ENCODE measurements at regions of chr15 and their contacts with region 1.

Region 1: DNA sequence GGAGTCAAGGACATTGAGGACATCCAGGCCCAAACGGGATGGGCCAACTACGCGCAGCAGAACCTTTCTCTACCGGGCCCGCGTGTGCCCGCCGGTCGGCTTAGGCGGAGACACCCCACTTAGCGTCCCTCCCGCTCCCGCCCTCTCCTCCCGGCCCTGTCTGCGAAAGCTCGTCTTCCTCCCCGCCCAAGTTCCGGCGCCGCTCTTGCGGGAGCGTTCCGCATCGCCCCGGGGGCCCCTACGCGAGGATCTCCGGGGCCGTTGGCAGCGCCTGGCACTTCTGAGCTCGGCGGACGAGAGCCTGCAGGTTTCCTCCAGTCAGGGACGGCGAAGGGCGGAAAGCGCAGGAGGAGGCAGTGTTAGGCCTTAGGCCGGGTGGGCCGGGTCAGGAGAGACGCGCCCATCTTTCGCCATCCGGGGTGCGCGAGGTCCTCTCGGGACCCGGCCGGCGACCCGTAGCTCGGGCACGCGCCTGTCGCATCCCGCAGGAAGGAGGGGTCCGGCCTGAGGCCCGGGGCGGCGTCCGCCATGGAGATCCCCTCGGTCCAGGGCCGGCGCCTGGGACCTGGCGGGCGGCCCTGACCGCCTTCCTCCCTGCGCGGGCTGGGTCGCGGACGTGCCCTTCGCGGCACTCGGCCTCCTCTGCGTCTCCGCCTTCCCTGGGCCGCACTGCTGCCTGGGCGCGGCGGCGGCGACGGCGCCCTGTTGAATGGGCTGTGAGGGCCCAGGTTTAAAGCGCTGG is at the start of gene FEM1B:
- DNase-seq: peak; percentile 97
- ATAC-seq: peak; percentile 79
- H3K4me3 ChIP-seq: peak within 1 kb of the TSS; percentile 77 to 89 (median 79)
- H3K4me3 Mint-ChIP-seq: peak within 1 kb of the TSS; percentile 98
- H3K27ac ChIP-seq: peak within 1 kb of the TSS; percentile 96
- H3K27ac Mint-ChIP-seq: peak within 1 kb of the TSS; percentile 98
- H3K4me1 ChIP-seq: peaks cover 40% of the 10 kb centered on the region in 2 donors
- H3K4me1 Mint-ChIP-seq: peaks cover 57% of the 10 kb centered on the region
- H3K27me3 ChIP-seq: no peaks in the 10 kb centered on the region
- H3K27me3 Mint-ChIP-seq: no peaks in the 10 kb centered on the region
- CTCF ChIP-seq: no peak
- total RNA-seq, gene FEM1B: 52.4 and 54.4 TPM in 2 replicates

Region 2: GRCh38 chr15:67542420-67543347 is 735.1 kb before region 1 on chr15 and contains the start of gene MAP2K5:
- CTCF ChIA-PET with region 1: no interaction called
- POLR2A ChIA-PET with region 1: no interaction called
- intact Hi-C with region 1: loop called (anchors 5 kb)
- DNase-seq: peak; percentile 85
- ATAC-seq: peak; percentile 80
- H3K4me3 ChIP-seq: peak within 1 kb of the TSS; percentile 78 to 99 (median 83)
- H3K4me3 Mint-ChIP-seq: peak within 1 kb of the TSS; percentile 91
- H3K27ac ChIP-seq: peak within 1 kb of the TSS; percentile 79 to 83
- H3K27ac Mint-ChIP-seq: peak within 1 kb of the TSS; percentile 93
- H3K4me1 ChIP-seq: peaks cover 25 to 28% of the 10 kb centered on the region in 2 donors
- H3K4me1 Mint-ChIP-seq: peaks cover 51% of the 10 kb centered on the region
- H3K27me3 ChIP-seq: peaks cover 0 to 6% (median 3%) of the 10 kb centered on the region in 4 experiments
- H3K27me3 Mint-ChIP-seq: peaks cover 5% of the 10 kb centered on the region
- CTCF ChIP-seq: no peak
- total RNA-seq, gene MAP2K5: 40.0 and 47.1 TPM in 2 replicates

Region 3: DNA sequence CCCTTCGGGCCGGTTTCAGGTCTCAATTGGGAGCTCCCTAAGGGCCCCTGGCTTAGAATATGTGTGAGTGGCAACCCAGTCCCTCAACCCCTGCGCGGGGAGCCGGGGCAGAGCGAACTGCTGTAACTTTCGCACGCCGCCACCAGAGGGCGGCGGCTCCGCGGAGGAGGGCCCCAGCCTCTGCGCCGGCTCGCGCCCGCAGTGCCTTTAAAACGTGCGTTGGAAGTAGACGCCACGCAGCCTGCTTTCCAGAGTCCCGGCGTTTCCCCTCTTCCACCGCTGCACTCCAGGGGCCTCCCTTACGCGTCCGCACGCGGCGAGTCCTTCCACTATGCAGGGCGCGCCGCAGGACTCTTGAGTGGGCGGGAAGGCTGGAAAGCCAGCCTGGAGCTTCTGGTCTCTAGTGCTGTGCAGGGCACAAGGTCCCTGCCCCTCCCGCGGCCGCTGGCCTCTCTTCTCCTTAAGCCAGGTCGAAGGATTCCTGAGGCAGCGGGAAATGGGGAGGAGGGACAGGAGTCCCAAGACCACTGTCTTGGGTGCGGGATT is 414.3 kb before region 1 on chr15:
- CTCF ChIA-PET with region 1: no interaction called
- POLR2A ChIA-PET with region 1: no interaction called
- intact Hi-C with region 1: loop called (anchors 5 kb)
- DNase-seq: peak; percentile 83
- ATAC-seq: peak; percentile 92
- H3K4me3 ChIP-seq: peak overlapping the region in 4 of 5 experiments; percentile 25 to 60 (median 52)
- H3K4me3 Mint-ChIP-seq: peak overlapping the region; percentile 80
- H3K27ac ChIP-seq: no peak overlapping the region
- H3K27ac Mint-ChIP-seq: peak overlapping the region; percentile 90
- H3K4me1 ChIP-seq: peaks cover 14 to 15% of the 10 kb centered on the region in 2 donors
- H3K4me1 Mint-ChIP-seq: peaks cover 14% of the 10 kb centered on the region
- H3K27me3 ChIP-seq: peaks cover 0 to 4% (median 2%) of the 10 kb centered on the region in 4 experiments
- H3K27me3 Mint-ChIP-seq: peaks cover 9% of the 10 kb centered on the region
- CTCF ChIP-seq: peak; percentile 91

Region 4: DNA sequence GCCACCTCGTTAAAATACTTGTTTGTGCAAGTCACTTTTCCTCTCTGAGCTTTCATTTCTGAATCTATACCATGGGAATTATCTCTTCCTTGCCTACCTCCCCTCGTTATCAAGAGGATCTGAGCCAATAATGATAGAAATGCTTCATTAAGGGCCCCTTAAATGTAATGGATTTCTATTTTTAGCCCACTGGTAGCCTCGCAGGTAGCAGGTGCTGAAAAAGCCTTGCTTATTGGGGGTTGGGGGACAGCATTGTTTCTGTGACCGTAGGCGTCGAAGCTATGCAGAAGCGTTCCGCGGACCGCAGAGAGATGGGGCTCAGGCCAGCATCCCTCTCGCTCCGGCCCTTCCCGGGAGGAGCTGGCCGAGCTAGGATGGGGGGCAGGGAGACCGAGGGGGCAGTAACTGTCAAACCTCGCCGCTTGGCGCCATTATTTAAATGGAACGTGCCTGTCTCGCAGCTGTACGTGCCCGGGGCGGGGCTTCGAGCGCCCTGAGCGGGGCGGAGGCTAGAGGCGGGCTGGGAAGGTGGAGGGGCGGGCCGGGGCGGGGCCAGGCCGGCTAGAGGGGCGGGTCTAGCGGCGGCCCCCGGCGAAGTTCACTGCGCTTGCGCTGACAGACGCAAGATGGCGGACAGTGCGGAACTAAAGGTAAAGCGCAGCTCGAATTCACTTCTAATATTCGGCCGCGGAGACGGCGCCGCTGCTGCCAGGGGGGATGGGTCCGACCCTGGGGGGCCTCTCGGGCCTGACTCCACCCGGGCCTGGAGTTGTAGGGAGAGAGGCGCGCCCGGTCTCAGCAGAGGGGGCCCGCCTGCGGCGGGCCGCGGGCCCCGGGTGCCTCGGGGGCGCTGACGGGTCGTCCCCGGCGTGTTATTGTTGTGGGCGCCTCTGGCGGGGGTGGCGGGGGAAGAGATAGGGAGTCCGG is 223.8 kb before region 1 on chr15 and contains the start of gene PIAS1:
- CTCF ChIA-PET with region 1: no interaction called
- POLR2A ChIA-PET with region 1: interaction called, 5 read pairs
- intact Hi-C with region 1: loop called (anchors 5 kb)
- DNase-seq: peak; percentile 95
- ATAC-seq: peak; percentile 92
- H3K4me3 ChIP-seq: peak within 1 kb of the TSS; percentile 77 to 99 (median 88)
- H3K4me3 Mint-ChIP-seq: peak within 1 kb of the TSS; percentile 93
- H3K27ac ChIP-seq: peak within 1 kb of the TSS; percentile 78 to 92
- H3K27ac Mint-ChIP-seq: peak within 1 kb of the TSS; percentile 96
- H3K4me1 ChIP-seq: peaks cover 11 to 26% of the 10 kb centered on the region in 2 donors
- H3K4me1 Mint-ChIP-seq: peaks cover 40% of the 10 kb centered on the region
- H3K27me3 ChIP-seq: no peaks in the 10 kb centered on the region
- H3K27me3 Mint-ChIP-seq: no peaks in the 10 kb centered on the region
- CTCF ChIP-seq: no peak
- total RNA-seq, gene PIAS1: 87.3 and 97.5 TPM in 2 replicates

Region 5: GRCh38 chr15:68229386-68230156 is 48.2 kb before region 1 on chr15 and contains the start of gene CLN6:
- CTCF ChIA-PET with region 1: interaction called, 6 read pairs
- POLR2A ChIA-PET with region 1: interaction called, 26 read pairs
- intact Hi-C with region 1: loop called (anchors 1 kb)
- DNase-seq: peak; percentile 93
- ATAC-seq: peak; percentile 87
- H3K4me3 ChIP-seq: peak within 1 kb of the TSS; percentile 57 to 76 (median 73)
- H3K4me3 Mint-ChIP-seq: peak within 1 kb of the TSS; percentile 96
- H3K27ac ChIP-seq: peak within 1 kb of the TSS; percentile 60 to 88
- H3K27ac Mint-ChIP-seq: peak within 1 kb of the TSS; percentile 92
- H3K4me1 ChIP-seq: peaks cover 23 to 42% of the 10 kb centered on the region in 2 donors
- H3K4me1 Mint-ChIP-seq: peaks cover 45% of the 10 kb centered on the region
- H3K27me3 ChIP-seq: peaks cover 0 to 2% (median 0%) of the 10 kb centered on the region in 4 experiments
- H3K27me3 Mint-ChIP-seq: no peaks in the 10 kb centered on the region
- CTCF ChIP-seq: no peak
- total RNA-seq, gene CLN6: 22.8 and 31.5 TPM in 2 replicates

Region 6: GRCh38 chr15:68298882-68299381 is 21.2 kb after region 1 on chr15:
- CTCF ChIA-PET with region 1: interaction called, 6 read pairs
- POLR2A ChIA-PET with region 1: no interaction called
- intact Hi-C with region 1: loop called (anchors 2 kb)
- DNase-seq: peak; percentile 70
- ATAC-seq: peak; percentile 81
- H3K4me3 ChIP-seq: peak overlapping the region; percentile 18 to 68 (median 52)
- H3K4me3 Mint-ChIP-seq: peak overlapping the region; percentile 86
- H3K27ac ChIP-seq: peak overlapping the region; percentile 22 to 55
- H3K27ac Mint-ChIP-seq: peak overlapping the region; percentile 80
- H3K4me1 ChIP-seq: peaks cover 4 to 14% of the 10 kb centered on the region in 2 donors
- H3K4me1 Mint-ChIP-seq: peaks cover 17% of the 10 kb centered on the region
- H3K27me3 ChIP-seq: no peaks in the 10 kb centered on the region
- H3K27me3 Mint-ChIP-seq: no peaks in the 10 kb centered on the region
- CTCF ChIP-seq: no peak

Region 7: GRCh38 chr15:68304589-68305337 is 27.0 kb after region 1 on chr15:
- CTCF ChIA-PET with region 1: interaction called, 14 read pairs
- POLR2A ChIA-PET with region 1: no interaction called
- intact Hi-C with region 1: loop called (anchors 1 kb)
- DNase-seq: no peak
- ATAC-seq: no peak
- H3K4me3 ChIP-seq: no peak overlapping the region
- H3K4me3 Mint-ChIP-seq: no peak overlapping the region
- H3K27ac ChIP-seq: no peak overlapping the region
- H3K27ac Mint-ChIP-seq: no peak overlapping the region
- H3K4me1 ChIP-seq: peaks cover 5 to 6% of the 10 kb centered on the region in 2 donors
- H3K4me1 Mint-ChIP-seq: peaks cover 9% of the 10 kb centered on the region
- H3K27me3 ChIP-seq: no peaks in the 10 kb centered on the region
- H3K27me3 Mint-ChIP-seq: peaks cover 9% of the 10 kb centered on the region
- CTCF ChIP-seq: no peak

Region 8: GRCh38 chr15:68389936-68390790 is 112.4 kb after region 1 on chr15:
- CTCF ChIA-PET with region 1: no interaction called
- POLR2A ChIA-PET with region 1: no interaction called
- intact Hi-C with region 1: no loop called
- DNase-seq: no peak
- ATAC-seq: no peak
- H3K4me3 ChIP-seq: no peak overlapping the region
- H3K4me3 Mint-ChIP-seq: no peak overlapping the region
- H3K27ac ChIP-seq: no peak overlapping the region
- H3K27ac Mint-ChIP-seq: no peak overlapping the region
- H3K4me1 ChIP-seq: no peaks in the 10 kb centered on the region
- H3K4me1 Mint-ChIP-seq: no peaks in the 10 kb centered on the region
- H3K27me3 ChIP-seq: peaks cover 0 to 16% (median 9%) of the 10 kb centered on the region in 4 experiments
- H3K27me3 Mint-ChIP-seq: peaks cover 42% of the 10 kb centered on the region
- CTCF ChIP-seq: no peak

Measured in B cell (primary cell).